Left colon (tissue), 2 donors: ENCODE measurements at regions of chr1 and their contacts with region 1.

Region 1: GRCh38 chr1:46724991-46725735 is 6.2 kb upstream of the EFCAB14 start:
- DNase-seq: peak; percentile 55 to 78
- ATAC-seq: peak; percentile 95

Region 2: GRCh38 chr1:46539972-46540371 is 185.2 kb before region 1 on chr1:
- intact Hi-C with region 1: loop called in 1 of 2 experiments (anchors 5 kb)
- DNase-seq: no peak
- ATAC-seq: no peak

Region 3: GRCh38 chr1:46622344-46622743 is 102.8 kb before region 1 on chr1:
- intact Hi-C with region 1: loop called in 1 of 2 experiments (anchors 5 kb)
- DNase-seq: peak in 1 of 2 donors; percentile 57
- ATAC-seq: peak; percentile 77